Dorsolateral prefrontal cortex (tissue), 120 donors: ENCODE measurements at regions of chr17 and their contacts with region 1.

Region 1: GRCh38 chr17:49361902-49362722 is at the start of gene ZNF652:
- DNase-seq: peak; percentile 81 to 93 (median 90)
- H3K4me3 ChIP-seq: peak within 1 kb of the TSS; percentile 69 to 99 (median 94)
- H3K27ac ChIP-seq: peak within 1 kb of the TSS; percentile 89 to 99 (median 97)
- H3K27me3 ChIP-seq: no peaks in the 10 kb centered on the region
- CTCF ChIP-seq: peak in 3 of 56 donors; percentile 1 to 24 (median 16)
- total RNA-seq, gene ZNF652: 27.4 to 153 (median 59.4) TPM

Region 2: GRCh38 chr17:49315551-49316257 is 46.4 kb before region 1 on chr17:
- intact Hi-C with region 1: loop called in 1 of 2 experiments (anchors 2 kb)
- DNase-seq: peak; percentile 53 to 88 (median 78)
- H3K4me3 ChIP-seq: peak overlapping the region in 31 of 59 donors; percentile 0 to 47 (median 23)
- H3K27ac ChIP-seq: peak overlapping the region in 58 of 59 donors; percentile 3 to 95 (median 83)
- H3K27me3 ChIP-seq: no peaks in the 10 kb centered on the region
- CTCF ChIP-seq: peak; percentile 60 to 97 (median 85)

Region 3: GRCh38 chr17:49399995-49400394 is 37.9 kb after region 1 on chr17:
- intact Hi-C with region 1: loop called (anchors 5 kb)
- DNase-seq: no peak
- H3K4me3 ChIP-seq: no peak overlapping the region
- H3K27ac ChIP-seq: peak overlapping the region in 22 of 59 donors; percentile 4 to 98 (median 46)
- H3K27me3 ChIP-seq: no peaks in the 10 kb centered on the region
- CTCF ChIP-seq: no peak

Region 4: DNA sequence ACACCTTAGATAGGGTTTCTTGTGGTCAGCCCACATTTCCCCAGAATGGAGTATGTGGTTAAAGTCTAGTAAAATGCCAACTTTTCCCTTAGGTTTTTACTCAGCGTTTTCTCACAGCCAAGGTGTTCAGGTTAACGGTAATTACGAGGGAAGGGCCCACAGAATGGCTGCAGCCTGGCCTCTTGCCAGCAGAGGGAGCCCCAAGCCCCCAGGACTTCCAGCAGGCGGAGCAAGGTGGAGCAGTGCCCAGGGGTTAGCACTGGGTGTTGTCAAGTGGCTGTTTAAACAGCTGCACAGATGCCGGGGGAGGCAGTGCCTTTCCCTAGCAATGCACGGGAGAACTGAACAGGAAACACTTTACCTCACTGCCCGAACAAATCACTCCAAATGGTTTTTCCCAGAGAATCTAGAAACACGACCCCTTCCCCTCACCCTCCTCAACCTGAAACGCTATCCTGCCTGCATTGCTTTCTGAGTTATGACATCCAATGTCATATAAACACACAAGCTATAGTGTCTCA is 45.9 kb after region 1 on chr17:
- intact Hi-C with region 1: loop called in 1 of 2 experiments (anchors 5 kb)
- DNase-seq: peak; percentile 55 to 79 (median 68)
- H3K4me3 ChIP-seq: no peak overlapping the region
- H3K27ac ChIP-seq: peak overlapping the region in 36 of 59 donors; percentile 0 to 94 (median 37)
- H3K27me3 ChIP-seq: no peaks in the 10 kb centered on the region
- CTCF ChIP-seq: peak; percentile 42 to 86 (median 72)

Region 5: GRCh38 chr17:49422714-49423113 is 60.6 kb after region 1 on chr17:
- intact Hi-C with region 1: no loop called
- DNase-seq: no peak
- H3K4me3 ChIP-seq: no peak overlapping the region
- H3K27ac ChIP-seq: no peak overlapping the region
- H3K27me3 ChIP-seq: peaks cover 0 to 7% (median 0%) of the 10 kb centered on the region in 45 donors
- CTCF ChIP-seq: no peak

Region 6: DNA sequence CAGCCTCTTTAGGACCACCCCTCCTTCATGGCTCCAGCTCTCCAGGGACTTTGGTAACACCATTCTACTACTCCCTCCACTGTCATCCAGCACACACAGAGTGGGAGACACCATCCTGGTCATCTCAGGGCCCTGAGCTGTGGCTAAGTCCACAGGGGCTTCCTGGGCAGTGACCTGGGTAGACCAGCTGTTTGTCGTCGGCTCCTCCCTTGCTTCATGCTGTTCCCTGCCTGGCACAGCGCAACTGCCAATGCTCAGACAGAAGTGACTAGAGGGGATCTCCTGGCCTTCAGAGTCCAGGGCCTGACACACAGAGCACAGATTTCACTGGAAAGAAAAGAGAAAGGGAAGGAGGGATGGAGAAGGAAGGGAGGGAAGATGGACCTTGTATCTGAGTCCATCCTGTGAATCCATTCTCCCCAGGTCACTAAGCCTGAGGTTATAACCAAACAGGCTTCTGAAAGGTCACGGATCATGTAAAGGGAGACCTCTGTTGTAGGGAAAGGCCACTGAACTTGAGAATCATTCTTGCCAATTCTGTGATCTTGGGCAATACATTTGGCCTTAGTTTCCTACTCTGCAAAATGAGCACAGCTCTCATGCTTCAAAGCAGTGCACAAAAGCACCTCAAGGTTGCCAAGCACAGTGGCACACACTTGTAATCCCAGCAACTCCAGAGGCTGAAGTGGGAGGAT is 71.0 kb after region 1 on chr17:
- intact Hi-C with region 1: no loop called
- DNase-seq: no peak
- H3K4me3 ChIP-seq: no peak overlapping the region
- H3K27ac ChIP-seq: no peak overlapping the region
- H3K27me3 ChIP-seq: peaks cover 0 to 15% (median 0%) of the 10 kb centered on the region in 45 donors
- CTCF ChIP-seq: no peak